Left cardiac atrium (tissue), 4 donors: ENCODE measurements at regions of chr2 and their contacts with region 1.

Region 1: GRCh38 chr2:135004005-135004746 is 43.1 kb downstream of the MAP3K19 start:
- DNase-seq: peak; percentile 75
- ATAC-seq: peak; percentile 99

Region 2: GRCh38 chr2:135149251-135149650 is 145.1 kb after region 1 on chr2:
- intact Hi-C with region 1: loop called in 1 of 2 experiments (anchors 10 kb)
- DNase-seq: no peak
- ATAC-seq: peak in 1 of 2 donors; percentile 70

Region 3: GRCh38 chr2:135709992-135710391 is 705.8 kb after region 1 on chr2:
- intact Hi-C with region 1: loop called in 1 of 2 experiments (anchors 5 kb)
- DNase-seq: peak; percentile 46
- ATAC-seq: peak; percentile 47 to 60